Activated CD4-positive, alpha-beta T cell treated with anti-CD3 and anti-CD28 coated beads, Interleukin-2, amount 10 ng/mL, durations not matched to agents 24 days and 14 days (primary cell): ENCODE measurements at regions of chr1 and their contacts with region 1.

Region 1: DNA sequence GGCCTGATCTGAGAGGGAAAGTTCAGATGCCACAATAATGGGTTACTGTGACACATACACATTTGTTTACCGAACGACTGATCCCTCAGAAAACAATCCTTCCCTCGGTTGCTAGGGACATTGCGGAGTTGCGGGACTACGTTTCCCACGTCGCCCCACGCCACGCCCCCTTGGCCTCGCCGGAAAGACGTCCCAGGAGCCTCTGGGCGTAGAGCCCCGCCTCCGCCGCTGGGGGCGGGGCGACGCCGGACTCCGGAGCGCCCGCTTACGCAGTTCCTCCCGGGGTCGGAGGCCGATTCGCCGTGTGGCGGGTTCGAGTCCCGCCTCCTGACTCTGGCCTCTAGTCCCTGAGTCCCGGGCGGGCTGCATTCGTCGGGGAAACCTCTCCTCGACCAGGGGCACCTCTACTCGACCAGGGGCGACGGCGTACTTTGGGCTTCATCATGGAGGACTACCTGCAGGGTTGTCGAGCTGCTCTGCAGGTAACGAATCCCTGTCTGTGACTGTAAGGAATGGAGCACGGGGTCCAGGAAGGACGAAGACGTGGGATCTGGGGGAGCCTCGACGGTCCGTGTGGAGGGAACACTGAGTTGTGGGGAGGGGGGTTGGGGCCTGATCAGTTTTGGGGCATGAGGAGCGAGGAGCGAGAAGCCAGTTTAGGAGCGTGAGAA is at the start of gene PRUNE1:
- DNase-seq: peak; percentile 98
- H3K4me3 Mint-ChIP-seq: peak within 1 kb of the TSS; percentile 100
- H3K27ac Mint-ChIP-seq: peak within 1 kb of the TSS; percentile 90
- H3K4me1 Mint-ChIP-seq: peaks cover 58% of the 10 kb centered on the region
- H3K27me3 Mint-ChIP-seq: no peaks in the 10 kb centered on the region
- total RNA-seq, gene PRUNE1: 13.3 and 15.2 TPM in 2 replicates

Region 2: GRCh38 chr1:150486964-150487762 is 521.2 kb before region 1 on chr1 and contains the start of gene TARS2:
- intact Hi-C with region 1: loop called (anchors 10 kb)
- DNase-seq: peak; percentile 99
- H3K4me3 Mint-ChIP-seq: peak within 1 kb of the TSS; percentile 87
- H3K27ac Mint-ChIP-seq: peak within 1 kb of the TSS; percentile 97
- H3K4me1 Mint-ChIP-seq: peaks cover 21% of the 10 kb centered on the region
- H3K27me3 Mint-ChIP-seq: no peaks in the 10 kb centered on the region
- total RNA-seq, gene TARS2: 68.8 and 77.4 TPM in 2 replicates

Region 3: GRCh38 chr1:150778409-150778808 is 229.9 kb before region 1 on chr1:
- intact Hi-C with region 1: no loop called
- DNase-seq: no peak
- H3K4me3 Mint-ChIP-seq: no peak overlapping the region
- H3K27ac Mint-ChIP-seq: no peak overlapping the region
- H3K4me1 Mint-ChIP-seq: peaks cover 10% of the 10 kb centered on the region
- H3K27me3 Mint-ChIP-seq: no peaks in the 10 kb centered on the region

Region 4: DNA sequence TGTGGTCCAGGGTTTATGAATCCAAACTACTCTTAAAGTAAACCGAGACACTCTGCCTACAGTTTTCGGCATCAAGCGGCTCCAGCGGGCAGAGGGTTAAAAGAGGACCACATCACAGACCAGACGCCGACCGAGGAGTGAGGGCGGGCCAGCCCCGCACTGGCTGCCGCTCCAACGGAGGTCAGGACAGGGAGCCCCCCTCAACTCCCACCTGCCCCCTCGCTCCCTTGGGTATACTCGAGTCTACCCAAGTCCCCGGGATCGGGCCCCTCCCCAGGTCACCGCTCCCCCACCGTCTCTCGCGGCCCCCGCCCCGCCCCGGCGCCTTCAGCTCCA is 132.2 kb before region 1 on chr1:
- intact Hi-C with region 1: loop called (anchors 2 kb)
- DNase-seq: no peak
- H3K4me3 Mint-ChIP-seq: peak overlapping the region; percentile 96
- H3K27ac Mint-ChIP-seq: peak overlapping the region; percentile 94
- H3K4me1 Mint-ChIP-seq: peaks cover 25% of the 10 kb centered on the region
- H3K27me3 Mint-ChIP-seq: no peaks in the 10 kb centered on the region

Region 5: GRCh38 chr1:150987924-150988323 is 20.4 kb before region 1 on chr1:
- intact Hi-C with region 1: no loop called
- DNase-seq: no peak
- H3K4me3 Mint-ChIP-seq: no peak overlapping the region
- H3K27ac Mint-ChIP-seq: no peak overlapping the region
- H3K4me1 Mint-ChIP-seq: peaks cover 3% of the 10 kb centered on the region
- H3K27me3 Mint-ChIP-seq: no peaks in the 10 kb centered on the region

Region 6: DNA sequence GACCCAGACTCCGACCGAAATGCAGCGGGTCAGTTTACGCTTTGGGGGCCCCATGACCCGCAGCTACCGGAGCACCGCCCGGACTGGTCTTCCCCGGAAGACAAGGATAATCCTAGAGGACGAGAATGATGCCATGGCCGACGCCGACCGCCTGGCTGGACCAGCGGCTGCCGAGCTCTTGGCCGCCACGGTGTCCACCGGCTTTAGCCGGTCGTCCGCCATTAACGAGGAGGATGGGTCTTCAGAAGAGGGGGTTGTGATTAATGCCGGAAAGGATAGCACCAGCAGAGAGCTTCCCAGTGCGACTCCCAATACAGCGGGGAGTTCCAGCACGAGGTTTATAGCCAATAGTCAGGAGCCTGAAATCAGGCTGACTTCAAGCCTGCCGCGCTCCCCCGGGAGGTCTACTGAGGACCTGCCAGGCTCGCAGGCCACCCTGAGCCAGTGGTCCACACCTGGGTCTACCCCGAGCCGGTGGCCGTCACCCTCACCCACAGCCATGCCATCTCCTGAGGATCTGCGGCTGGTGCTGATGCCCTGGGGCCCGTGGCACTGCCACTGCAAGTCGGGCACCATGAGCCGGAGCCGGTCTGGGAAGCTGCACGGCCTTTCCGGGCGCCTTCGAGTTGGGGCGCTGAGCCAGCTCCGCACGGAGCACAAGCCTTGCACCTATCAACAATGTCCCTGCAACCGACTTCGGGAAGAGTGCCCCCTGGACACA is 39.8 kb after region 1 on chr1:
- intact Hi-C with region 1: loop called (anchors 2 kb)
- DNase-seq: peak; percentile 86
- H3K4me3 Mint-ChIP-seq: peak overlapping the region; percentile 93
- H3K27ac Mint-ChIP-seq: peak overlapping the region; percentile 84
- H3K4me1 Mint-ChIP-seq: peaks cover 45% of the 10 kb centered on the region
- H3K27me3 Mint-ChIP-seq: no peaks in the 10 kb centered on the region

Region 7: DNA sequence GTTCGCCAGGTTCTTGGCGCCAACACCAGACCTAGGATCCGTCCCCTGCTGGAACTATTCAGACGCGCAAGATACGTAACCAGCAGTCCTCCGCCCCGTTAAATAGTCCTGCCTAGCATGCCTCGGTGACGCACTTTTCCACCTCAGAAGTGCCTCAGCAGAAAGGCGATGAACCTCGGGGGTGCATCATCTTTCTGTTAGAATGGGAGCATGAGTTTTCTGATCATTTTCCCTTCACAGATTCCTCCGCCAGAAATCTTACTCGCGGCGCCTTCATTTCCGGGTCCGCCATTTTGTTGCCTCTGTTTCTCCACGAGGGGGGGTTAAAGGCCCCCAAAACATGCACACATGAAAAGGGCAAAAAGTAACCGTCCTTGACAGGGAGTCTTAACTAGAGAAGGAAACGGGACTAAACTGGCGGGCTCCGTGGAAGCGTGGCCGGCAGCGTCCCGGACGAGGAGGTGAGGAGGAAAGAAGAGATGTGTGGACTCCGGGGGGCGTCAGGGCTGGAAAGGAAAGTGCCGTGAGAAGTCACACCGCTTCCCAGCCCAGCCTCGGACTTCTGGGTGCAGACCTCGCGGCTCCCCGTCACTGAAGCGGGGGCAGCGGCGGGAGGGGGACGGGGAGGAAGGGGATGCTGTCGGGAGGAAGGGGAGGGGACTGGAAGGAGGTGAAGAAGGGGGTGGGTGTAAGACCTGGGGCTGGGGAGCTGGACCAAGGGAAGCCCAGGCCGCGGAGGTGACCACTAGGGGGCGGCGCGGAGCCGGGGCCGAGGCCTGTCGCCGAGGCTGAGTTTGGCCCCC is 62.4 kb after region 1 on chr1 and contains the start of gene GABPB2:
- intact Hi-C with region 1: loop called (anchors 1 kb)
- DNase-seq: peak; percentile 96
- H3K4me3 Mint-ChIP-seq: peak within 1 kb of the TSS; percentile 91
- H3K27ac Mint-ChIP-seq: peak within 1 kb of the TSS; percentile 99
- H3K4me1 Mint-ChIP-seq: peaks cover 17% of the 10 kb centered on the region
- H3K27me3 Mint-ChIP-seq: no peaks in the 10 kb centered on the region
- total RNA-seq, gene GABPB2: 19.4 and 20.3 TPM in 2 replicates